ENCODE measurements at regions of chr11 and their contacts with region 1.

Region 1: GRCh38 chr11:111841370-111842053 is 29.9 kb downstream of the ALG9 start:
- DNase-seq: peak; percentile 85
- H3K4me3 ChIP-seq: no peak overlapping the region
- H3K27ac ChIP-seq: no peak overlapping the region
- H3K4me1 ChIP-seq: no peaks in the 10 kb centered on the region
- CTCF ChIP-seq: peak; percentile 98

Region 2: GRCh38 chr11:111586388-111586831 is 255.1 kb before region 1 on chr11:
- CTCF ChIA-PET with region 1: interaction called, 3 read pairs
- POLR2A ChIA-PET with region 1: interaction called, 4 read pairs
- intact Hi-C with region 1: loop called (anchors 1 kb)
- DNase-seq: peak; percentile 78
- H3K4me3 ChIP-seq: no peak overlapping the region
- H3K27ac ChIP-seq: no peak overlapping the region
- H3K4me1 ChIP-seq: peaks cover 25% of the 10 kb centered on the region
- CTCF ChIP-seq: peak; percentile 94